MCF 10A (cell line): ENCODE measurements at regions of chr7 and their contacts with region 1.

Region 1: DNA sequence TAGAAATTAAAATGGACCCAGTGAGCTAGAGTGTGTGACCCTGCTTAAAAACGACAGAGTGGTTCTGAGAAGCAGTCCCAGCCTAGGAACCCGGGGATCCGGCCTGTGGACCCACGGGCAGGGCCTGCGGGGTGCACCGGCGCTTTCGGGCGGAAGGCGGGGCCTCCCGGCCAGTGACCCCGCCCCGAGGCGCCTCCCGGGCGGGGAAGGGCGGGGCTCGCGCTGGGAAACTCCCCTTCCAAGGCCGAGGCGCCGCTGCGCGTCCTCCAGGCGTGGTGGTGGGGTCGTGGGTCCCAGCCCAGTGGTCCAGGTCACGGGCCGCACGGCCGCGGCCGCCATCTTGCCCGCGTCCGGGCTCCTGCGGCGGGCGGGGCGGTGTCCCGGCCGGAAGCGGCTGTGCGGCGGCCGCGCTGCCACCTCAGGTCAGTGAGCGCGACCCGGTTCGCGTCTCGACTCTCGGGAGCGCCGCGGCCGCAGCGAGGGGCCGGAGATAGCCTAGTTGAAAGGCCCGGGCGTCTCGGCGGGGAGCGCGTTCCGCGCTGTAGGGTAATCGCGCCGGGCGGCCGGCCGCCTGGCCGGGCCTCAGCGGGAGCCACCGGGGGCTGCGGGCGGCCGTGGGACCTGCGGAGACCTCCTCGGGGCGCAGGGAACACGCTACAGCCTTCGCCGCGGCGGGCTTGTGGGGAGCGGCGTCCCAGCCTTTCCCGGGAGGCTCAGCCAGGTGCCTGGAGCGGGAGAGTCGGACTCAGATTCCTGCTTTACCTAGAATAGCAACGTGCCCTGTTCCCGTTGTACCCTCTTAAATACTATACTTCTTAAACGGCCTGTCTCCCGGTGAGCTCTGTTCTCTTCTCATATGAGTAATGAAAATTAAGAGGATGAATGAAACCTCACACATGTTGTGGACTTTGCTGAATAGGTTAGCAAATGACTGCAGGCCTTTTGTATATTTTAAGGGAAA is at the start of gene MIOS:
- DNase-seq: peak; percentile 81
- H3K4me3 Mint-ChIP-seq: no peak within 1 kb of the TSS
- H3K27ac Mint-ChIP-seq: peak within 1 kb of the TSS; percentile 72
- H3K4me1 Mint-ChIP-seq: peaks cover 17% of the 10 kb centered on the region
- H3K27me3 Mint-ChIP-seq: no peaks in the 10 kb centered on the region
- CTCF ChIP-seq: no peak
- total RNA-seq, gene MIOS: 43.5 and 65.4 TPM in 2 replicates

Region 2: DNA sequence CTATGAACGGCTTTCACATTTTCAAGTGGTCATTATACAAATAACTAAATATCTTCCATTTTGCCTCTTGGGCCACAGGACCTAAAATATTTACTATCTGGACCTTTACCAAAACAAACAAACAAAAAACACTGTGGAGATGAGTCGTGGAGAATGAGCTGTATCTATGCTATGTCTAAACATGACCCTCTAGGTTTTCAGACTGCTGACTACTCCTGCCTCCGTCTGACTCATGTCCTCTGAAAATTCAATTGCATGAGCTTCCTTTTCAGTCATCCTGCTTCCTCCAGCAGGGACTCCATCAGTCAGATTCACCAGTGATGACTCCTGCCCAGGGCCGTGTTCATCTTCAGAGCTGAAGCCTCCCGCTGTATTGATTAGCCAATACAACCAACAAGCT is 128.1 kb before region 1 on chr7:
- CTCF ChIA-PET with region 1: no interaction called
- POLR2A ChIA-PET with region 1: interaction called, 17 read pairs
- intact Hi-C with region 1: no loop called
- DNase-seq: peak; percentile 95
- H3K4me3 Mint-ChIP-seq: peak overlapping the region; percentile 36
- H3K27ac Mint-ChIP-seq: peak overlapping the region; percentile 88
- H3K4me1 Mint-ChIP-seq: peaks cover 13% of the 10 kb centered on the region
- H3K27me3 Mint-ChIP-seq: no peaks in the 10 kb centered on the region
- CTCF ChIP-seq: no peak

Region 3: GRCh38 chr7:7443806-7444350 is 123.1 kb before region 1 on chr7:
- CTCF ChIA-PET with region 1: interaction called, 4 read pairs
- POLR2A ChIA-PET with region 1: interaction called, 17 read pairs
- intact Hi-C with region 1: no loop called
- DNase-seq: no peak
- H3K4me3 Mint-ChIP-seq: no peak overlapping the region
- H3K27ac Mint-ChIP-seq: no peak overlapping the region
- H3K4me1 Mint-ChIP-seq: peaks cover 16% of the 10 kb centered on the region
- H3K27me3 Mint-ChIP-seq: no peaks in the 10 kb centered on the region
- CTCF ChIP-seq: no peak

Region 4: GRCh38 chr7:7489546-7489945 is 77.4 kb before region 1 on chr7:
- CTCF ChIA-PET with region 1: interaction called, 4 read pairs
- POLR2A ChIA-PET with region 1: interaction called, 12 read pairs
- intact Hi-C with region 1: no loop called
- DNase-seq: peak; percentile 67
- H3K4me3 Mint-ChIP-seq: peak overlapping the region; percentile 1
- H3K27ac Mint-ChIP-seq: peak overlapping the region; percentile 71
- H3K4me1 Mint-ChIP-seq: peaks cover 27% of the 10 kb centered on the region
- H3K27me3 Mint-ChIP-seq: no peaks in the 10 kb centered on the region
- CTCF ChIP-seq: no peak

Region 5: DNA sequence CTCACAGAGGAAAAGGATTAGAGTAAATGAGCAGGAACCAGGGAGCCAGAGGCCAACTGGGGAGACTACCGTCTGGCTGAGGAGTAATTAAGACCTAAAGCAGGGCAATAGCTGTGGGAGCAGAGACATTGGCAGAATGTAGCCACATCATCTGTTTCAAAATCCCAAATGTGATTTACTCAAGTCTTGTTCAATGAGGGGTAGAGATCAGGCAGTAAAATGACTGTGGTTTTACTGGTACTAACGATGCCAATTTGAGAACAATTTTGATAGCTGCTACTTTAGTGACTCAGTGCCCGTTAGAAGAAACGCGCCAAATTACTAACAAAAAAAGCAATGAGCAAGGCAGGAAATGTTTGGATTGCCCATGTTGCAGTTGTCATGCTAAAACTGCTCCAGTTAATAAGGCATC is 12.9 kb before region 1 on chr7:
- CTCF ChIA-PET with region 1: interaction called, 5 read pairs
- POLR2A ChIA-PET with region 1: interaction called, 235 read pairs
- intact Hi-C with region 1: no loop called
- DNase-seq: peak; percentile 86
- H3K4me3 Mint-ChIP-seq: peak overlapping the region; percentile 58
- H3K27ac Mint-ChIP-seq: peak overlapping the region; percentile 98
- H3K4me1 Mint-ChIP-seq: peaks cover 44% of the 10 kb centered on the region
- H3K27me3 Mint-ChIP-seq: no peaks in the 10 kb centered on the region
- CTCF ChIP-seq: no peak